ENCODE measurements at regions of chr14 and their contacts with region 1.

Region 1: GRCh38 chr14:71117839-71118743 is 210.8 kb downstream of the PCNX1 start:
- DNase-seq: peak in 1 of 2 experiments; percentile 61
- H3K4me3 ChIP-seq: no peak overlapping the region
- H3K4me3 Mint-ChIP-seq: peak overlapping the region; percentile 46
- H3K27ac Mint-ChIP-seq: peak overlapping the region; percentile 79
- H3K4me1 ChIP-seq: peaks cover 60% of the 10 kb centered on the region
- H3K4me1 Mint-ChIP-seq: peaks cover 38% of the 10 kb centered on the region
- H3K27me3 ChIP-seq: no peaks in the 10 kb centered on the region
- H3K27me3 Mint-ChIP-seq: no peaks in the 10 kb centered on the region
- CTCF ChIP-seq: no peak

Region 2: DNA sequence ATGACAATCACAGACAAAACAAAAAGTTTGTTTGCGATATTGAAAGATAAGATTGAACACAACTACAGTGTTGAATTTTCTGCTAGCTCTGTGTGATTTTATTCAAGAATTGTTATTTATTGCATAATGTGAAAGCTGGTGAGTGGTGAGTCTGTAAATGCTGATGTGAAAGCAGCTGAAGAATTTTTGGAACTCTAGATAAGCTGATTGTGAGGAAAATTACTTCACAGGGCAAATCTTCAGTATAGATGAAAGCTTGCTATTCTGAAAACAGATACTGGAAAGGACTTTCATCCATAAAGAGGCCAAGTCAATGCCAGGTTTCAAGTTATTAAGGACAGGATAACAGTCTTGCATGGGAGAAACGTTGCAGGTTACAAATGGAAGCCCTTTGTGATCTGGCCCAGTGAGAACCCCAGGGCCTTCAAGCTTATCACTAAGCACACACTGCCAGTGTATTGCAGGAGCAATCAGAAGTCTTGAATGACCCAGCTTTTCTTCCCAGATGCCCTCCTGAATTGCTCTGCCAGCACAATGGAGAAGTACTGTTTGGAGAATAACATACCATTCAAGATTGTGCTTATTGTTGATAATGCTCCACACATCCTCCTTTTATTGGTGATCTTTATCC is 57.2 kb before region 1 on chr14:
- CTCF ChIA-PET with region 1: interaction called, 3 read pairs
- POLR2A ChIA-PET with region 1: interaction called, 3 read pairs
- intact Hi-C with region 1: loop called (anchors 2 kb)
- DNase-seq: peak; percentile 69 to 77
- H3K4me3 ChIP-seq: no peak overlapping the region
- H3K4me3 Mint-ChIP-seq: peak overlapping the region; percentile 18
- H3K27ac Mint-ChIP-seq: peak overlapping the region; percentile 88
- H3K4me1 ChIP-seq: peaks cover 39% of the 10 kb centered on the region
- H3K4me1 Mint-ChIP-seq: peaks cover 23% of the 10 kb centered on the region
- H3K27me3 ChIP-seq: no peaks in the 10 kb centered on the region
- H3K27me3 Mint-ChIP-seq: no peaks in the 10 kb centered on the region
- CTCF ChIP-seq: no peak

Region 3: GRCh38 chr14:71094722-71095121 is 23.4 kb before region 1 on chr14:
- CTCF ChIA-PET with region 1: no interaction called
- POLR2A ChIA-PET with region 1: no interaction called
- intact Hi-C with region 1: no loop called
- DNase-seq: no peak
- H3K4me3 ChIP-seq: no peak overlapping the region
- H3K4me3 Mint-ChIP-seq: no peak overlapping the region
- H3K27ac Mint-ChIP-seq: no peak overlapping the region
- H3K4me1 ChIP-seq: no peaks in the 10 kb centered on the region; the same call in 1 of the 2 replicates
- H3K4me1 Mint-ChIP-seq: peaks cover 8% of the 10 kb centered on the region
- H3K27me3 ChIP-seq: no peaks in the 10 kb centered on the region
- H3K27me3 Mint-ChIP-seq: no peaks in the 10 kb centered on the region
- CTCF ChIP-seq: no peak

Region 4: DNA sequence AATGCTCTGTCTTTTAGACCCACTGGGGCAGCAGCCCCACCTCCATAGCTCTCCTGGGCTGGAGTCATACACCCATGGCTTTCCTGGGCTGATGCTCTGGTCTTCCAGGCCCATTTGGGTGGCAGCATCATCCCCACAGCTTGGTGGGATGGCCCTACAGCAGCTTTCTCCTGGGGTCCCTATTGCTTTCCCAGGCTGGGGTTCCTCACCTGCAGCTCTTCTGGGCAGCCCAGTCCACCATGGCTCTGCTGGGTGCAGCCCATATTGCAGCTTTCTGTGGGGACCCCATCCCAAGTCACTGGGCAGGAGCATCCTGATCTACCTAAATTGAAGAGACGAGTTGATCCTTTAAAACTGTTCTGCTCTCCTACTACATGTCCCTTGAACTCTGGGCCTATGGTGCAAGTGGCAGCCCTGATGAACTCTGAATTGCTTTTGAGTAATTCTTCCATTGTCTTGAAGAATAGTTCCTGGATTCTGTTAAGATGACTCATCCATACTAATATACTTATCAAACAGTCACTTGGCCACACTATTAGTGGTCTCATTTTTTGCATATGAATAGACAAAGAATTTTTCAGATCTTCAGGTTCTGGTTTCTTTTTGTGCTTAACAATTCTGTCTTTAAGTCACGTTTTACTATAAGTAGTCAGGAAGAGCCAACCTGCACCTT is 1385.7 kb after region 1 on chr14:
- CTCF ChIA-PET with region 1: no interaction called
- POLR2A ChIA-PET with region 1: no interaction called
- intact Hi-C with region 1: no loop called
- DNase-seq: no peak
- H3K4me3 ChIP-seq: no peak overlapping the region
- H3K4me3 Mint-ChIP-seq: no peak overlapping the region
- H3K27ac Mint-ChIP-seq: no peak overlapping the region
- H3K4me1 ChIP-seq: no peaks in the 10 kb centered on the region
- H3K4me1 Mint-ChIP-seq: no peaks in the 10 kb centered on the region
- H3K27me3 ChIP-seq: no peaks in the 10 kb centered on the region
- H3K27me3 Mint-ChIP-seq: peaks cover 24% of the 10 kb centered on the region
- CTCF ChIP-seq: no peak

Measured in Caco-2 (cell line).